ENCODE measurements at regions of chr6 and their contacts with region 1.

Region 1: GRCh38 chr6:112780498-112781096 is 433.5 kb downstream of the RFPL4B start:
- DNase-seq: peak; percentile 87
- ATAC-seq: peak; percentile 94

Region 2: DNA sequence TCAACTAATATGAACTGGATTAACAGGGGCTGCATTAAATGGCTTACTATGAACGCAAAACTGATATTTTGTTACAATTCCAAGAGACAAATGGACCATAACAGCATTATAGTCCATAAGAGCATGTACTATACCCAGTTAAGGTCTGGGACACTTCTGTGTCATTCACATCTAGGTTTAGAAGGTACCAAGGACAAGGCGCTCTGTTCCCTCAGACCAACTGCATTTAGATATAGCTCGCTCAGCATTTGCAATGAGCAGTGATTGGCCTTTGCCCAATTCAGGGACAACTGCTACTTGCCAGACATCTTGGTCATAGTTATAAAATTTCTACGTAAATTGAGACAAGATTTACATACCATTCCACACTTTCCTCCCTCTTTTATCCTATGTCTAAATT is 1429.9 kb after region 1 on chr6:
- intact Hi-C with region 1: loop called (anchors 5 kb)
- DNase-seq: no peak
- ATAC-seq: no peak